ENCODE measurements at regions of chr9 and their contacts with region 1.

Region 1: GRCh38 chr9:115135821-115136778 is 18.1 kb upstream of the TNC start:
- DNase-seq: no peak
- H3K4me3 ChIP-seq: no peak overlapping the region
- H3K27ac ChIP-seq: no peak overlapping the region
- H3K4me1 ChIP-seq: no peaks in the 10 kb centered on the region
- H3K27me3 ChIP-seq: no peaks in the 10 kb centered on the region
- CTCF ChIP-seq: no peak

Region 2: GRCh38 chr9:114551883-114552685 is 584.0 kb before region 1 on chr9:
- CTCF ChIA-PET with region 1: no interaction called
- dilution Hi-C with region 1: no loop called
- in situ Hi-C with region 1: no loop called
- intact Hi-C with region 1: no loop called
- DNase-seq: peak; percentile 99
- H3K4me3 ChIP-seq: no peak overlapping the region
- H3K27ac ChIP-seq: peak overlapping the region; percentile 96
- H3K4me1 ChIP-seq: peaks cover 22% of the 10 kb centered on the region
- H3K27me3 ChIP-seq: no peaks in the 10 kb centered on the region
- CTCF ChIP-seq: no peak

Region 3: DNA sequence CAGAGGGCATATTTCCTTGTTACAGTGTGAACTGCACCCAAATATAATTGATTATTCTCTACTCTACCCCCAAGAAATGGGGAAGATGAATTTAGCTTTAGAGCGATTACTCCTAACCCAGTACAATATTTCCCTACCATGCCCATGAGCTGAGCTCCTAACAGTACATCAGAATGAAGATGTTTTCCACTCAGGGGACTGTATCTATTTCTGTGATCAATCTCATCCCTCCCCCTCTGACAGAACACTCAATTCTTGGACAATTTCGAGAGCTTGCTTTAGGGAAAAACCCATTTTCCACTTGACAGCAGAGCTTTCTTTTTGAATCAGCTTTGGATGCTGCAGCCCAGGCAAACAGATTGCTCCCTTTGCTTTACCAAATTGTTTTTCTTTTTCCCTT is 429.4 kb before region 1 on chr9:
- CTCF ChIA-PET with region 1: interaction called, 12 read pairs
- dilution Hi-C with region 1: no loop called
- in situ Hi-C with region 1: no loop called
- intact Hi-C with region 1: no loop called
- DNase-seq: no peak
- H3K4me3 ChIP-seq: no peak overlapping the region
- H3K27ac ChIP-seq: no peak overlapping the region
- H3K4me1 ChIP-seq: no peaks in the 10 kb centered on the region
- H3K27me3 ChIP-seq: no peaks in the 10 kb centered on the region
- CTCF ChIP-seq: no peak